PC-3 (cell line): ENCODE measurements at regions of chr20 and their contacts with region 1.

Region 1: GRCh38 chr20:49484180-49485140 is 2.0 kb upstream of the KCNB1 start:
- DNase-seq: peak; percentile 90
- ATAC-seq: peak; percentile 97
- H3K4me3 ChIP-seq: peak overlapping the region; percentile 67
- H3K27ac ChIP-seq: no peak overlapping the region
- H3K4me1 ChIP-seq: no peaks in the 10 kb centered on the region; the same call in 1 of the 2 replicates
- H3K27me3 ChIP-seq: peaks cover 36% of the 10 kb centered on the region
- CTCF ChIP-seq: peak; percentile 91

Region 2: GRCh38 chr20:48912065-48912762 is 572.2 kb before region 1 on chr20:
- CTCF ChIA-PET with region 1: no interaction called
- POLR2A ChIA-PET with region 1: no interaction called
- intact Hi-C with region 1: no loop called
- DNase-seq: no peak
- ATAC-seq: peak; percentile 35; the same call in 1 of the 2 replicates
- H3K4me3 ChIP-seq: no peak overlapping the region
- H3K27ac ChIP-seq: no peak overlapping the region
- H3K4me1 ChIP-seq: no peaks in the 10 kb centered on the region
- H3K27me3 ChIP-seq: no peaks in the 10 kb centered on the region
- CTCF ChIP-seq: no peak

Region 3: DNA sequence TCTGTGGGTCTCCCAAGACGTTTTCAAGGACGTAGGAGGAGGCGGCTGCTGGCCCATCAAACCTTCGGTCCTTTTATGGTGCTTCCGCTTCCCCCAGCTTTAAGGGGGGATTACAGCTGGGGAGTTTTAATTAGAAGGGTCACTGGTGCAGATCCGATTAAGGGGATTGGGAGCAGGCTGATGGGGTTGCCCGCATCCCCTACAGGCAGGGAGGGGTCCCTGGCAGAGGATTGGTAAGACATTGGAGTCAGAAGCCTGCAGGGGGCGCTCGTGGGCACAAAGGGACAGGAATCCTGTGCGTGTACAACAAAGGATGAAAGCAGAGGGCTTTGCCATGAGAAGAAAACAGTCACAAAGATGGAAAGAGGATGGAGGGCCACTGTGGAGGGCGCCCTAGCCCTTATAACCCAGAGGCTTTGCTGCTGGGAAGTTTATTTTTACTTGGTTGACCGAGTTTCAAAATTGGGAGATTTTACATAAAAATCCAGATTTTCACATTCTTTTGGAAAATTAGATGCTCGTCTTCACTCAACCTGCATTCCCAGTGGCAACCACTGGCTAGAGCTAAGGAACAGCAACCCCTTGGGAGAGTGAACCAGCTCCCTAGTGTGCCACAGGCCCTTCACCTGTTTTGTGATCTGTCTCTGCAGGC is 99.9 kb before region 1 on chr20:
- CTCF ChIA-PET with region 1: no interaction called
- POLR2A ChIA-PET with region 1: no interaction called
- intact Hi-C with region 1: loop called (anchors 5 kb)
- DNase-seq: peak; percentile 76
- ATAC-seq: peak; percentile 72
- H3K4me3 ChIP-seq: no peak overlapping the region
- H3K27ac ChIP-seq: no peak overlapping the region
- H3K4me1 ChIP-seq: no peaks in the 10 kb centered on the region
- H3K27me3 ChIP-seq: peaks cover 14% of the 10 kb centered on the region
- CTCF ChIP-seq: peak; percentile 93

Region 4: DNA sequence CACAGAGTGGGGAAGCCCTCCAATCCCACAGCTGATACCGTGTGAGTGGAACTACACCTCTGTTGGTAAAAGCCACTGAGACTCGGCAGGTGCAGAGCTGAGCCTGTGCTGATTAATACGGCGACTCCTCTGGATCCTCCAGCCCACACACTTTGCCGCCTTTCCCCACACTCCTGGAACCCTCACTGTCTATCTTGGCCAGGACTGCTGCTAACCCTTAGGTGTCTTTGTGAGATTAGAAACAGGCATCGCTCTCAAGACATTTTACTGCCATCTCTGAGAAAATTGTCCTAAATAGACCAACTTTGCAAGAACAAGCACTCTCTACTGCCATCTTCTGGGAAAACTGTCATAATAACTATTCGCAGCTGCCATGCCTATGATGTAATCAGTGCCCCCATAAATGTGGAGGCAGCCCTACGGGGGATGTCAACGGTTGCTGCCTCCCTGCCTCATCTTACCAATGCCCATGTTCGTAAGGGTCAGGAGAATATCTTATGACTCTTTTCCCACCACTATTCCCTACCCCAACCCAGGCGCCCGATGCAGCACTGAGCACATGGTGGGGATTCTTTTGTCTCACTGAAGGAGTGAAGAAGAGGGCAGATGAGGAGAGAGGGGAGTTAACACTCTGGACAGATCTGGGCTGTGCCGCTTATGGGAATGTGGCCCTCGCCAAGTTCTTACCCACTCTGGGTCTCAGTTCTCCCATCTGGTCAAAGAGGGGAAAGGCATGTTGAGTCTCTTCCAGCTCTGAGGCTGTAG is 24.2 kb after region 1 on chr20:
- CTCF ChIA-PET with region 1: interaction called, 6 read pairs
- POLR2A ChIA-PET with region 1: no interaction called
- intact Hi-C with region 1: loop called (anchors 2 kb)
- DNase-seq: peak; percentile 80
- ATAC-seq: peak; percentile 67
- H3K4me3 ChIP-seq: peak overlapping the region; percentile 23; the same call in 1 of the 2 replicates
- H3K27ac ChIP-seq: no peak overlapping the region
- H3K4me1 ChIP-seq: peaks cover 6% of the 10 kb centered on the region; the same call in 1 of the 2 replicates
- H3K27me3 ChIP-seq: peaks cover 74% of the 10 kb centered on the region
- CTCF ChIP-seq: peak; percentile 87